Prostate gland (tissue), 2 donors: ENCODE measurements at regions of chr1 and their contacts with region 1.

Region 1: GRCh38 chr1:81664341-81664740 is 136.4 kb upstream of the ADGRL2 start:
- DNase-seq: no peak
- H3K4me3 ChIP-seq: no peak overlapping the region
- H3K27ac ChIP-seq: no peak overlapping the region
- H3K4me1 ChIP-seq: no peaks in the 10 kb centered on the region
- H3K27me3 ChIP-seq: no peaks in the 10 kb centered on the region
- CTCF ChIP-seq: no peak
- POLR2A ChIP-seq: no peak

Region 2: GRCh38 chr1:81158592-81158991 is 505.7 kb before region 1 on chr1:
- intact Hi-C with region 1: no loop called
- DNase-seq: no peak
- H3K4me3 ChIP-seq: no peak overlapping the region
- H3K27ac ChIP-seq: no peak overlapping the region
- H3K4me1 ChIP-seq: no peaks in the 10 kb centered on the region
- H3K27me3 ChIP-seq: no peaks in the 10 kb centered on the region
- CTCF ChIP-seq: no peak
- POLR2A ChIP-seq: no peak

Region 3: DNA sequence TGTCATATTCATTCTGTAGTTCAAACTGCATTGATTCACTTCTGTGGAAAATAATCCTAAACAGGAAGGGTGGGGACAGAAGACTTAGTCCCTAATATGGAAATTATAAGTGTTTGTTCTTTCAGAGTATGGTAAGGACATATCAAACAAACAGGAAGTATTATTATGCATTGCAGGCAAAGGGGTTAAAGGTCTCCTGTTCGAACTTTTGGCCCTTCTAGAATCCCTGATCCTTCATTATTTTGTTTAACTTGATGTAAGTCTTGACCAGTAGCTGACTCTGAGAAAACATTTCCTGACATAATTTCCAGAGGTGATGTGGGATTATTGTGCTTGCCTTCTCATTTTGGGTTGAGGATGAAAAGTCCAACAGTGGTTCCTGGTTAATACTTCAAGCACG is 79.0 kb before region 1 on chr1:
- intact Hi-C with region 1: loop called (anchors 5 kb)
- DNase-seq: no peak
- H3K4me3 ChIP-seq: no peak overlapping the region
- H3K27ac ChIP-seq: no peak overlapping the region
- H3K4me1 ChIP-seq: no peaks in the 10 kb centered on the region
- H3K27me3 ChIP-seq: no peaks in the 10 kb centered on the region
- CTCF ChIP-seq: no peak
- POLR2A ChIP-seq: no peak

Region 4: DNA sequence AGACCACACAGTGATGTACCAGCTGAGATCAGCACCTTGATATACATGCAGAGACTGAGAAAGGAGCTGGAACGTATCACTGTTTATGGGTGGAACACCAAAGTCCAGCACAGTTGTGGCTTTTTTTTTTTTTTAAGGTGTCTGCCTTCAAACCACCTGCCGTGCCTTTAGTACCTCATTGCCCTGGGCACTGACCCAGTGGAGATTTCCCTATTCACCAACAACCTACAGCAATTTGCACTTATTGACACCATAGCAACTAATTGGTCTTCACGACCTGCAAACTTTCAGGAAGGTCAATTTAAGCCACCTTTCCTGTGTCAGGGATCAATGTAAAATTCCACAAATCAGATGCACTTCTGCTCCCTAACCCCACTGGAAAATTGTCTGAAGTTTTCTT is 45.2 kb before region 1 on chr1:
- intact Hi-C with region 1: no loop called
- DNase-seq: no peak
- H3K4me3 ChIP-seq: no peak overlapping the region
- H3K27ac ChIP-seq: no peak overlapping the region
- H3K4me1 ChIP-seq: no peaks in the 10 kb centered on the region
- H3K27me3 ChIP-seq: no peaks in the 10 kb centered on the region
- CTCF ChIP-seq: no peak
- POLR2A ChIP-seq: no peak